CD14-positive monocyte (primary cell): ENCODE measurements at regions of chr11 and their contacts with region 1.

Region 1: DNA sequence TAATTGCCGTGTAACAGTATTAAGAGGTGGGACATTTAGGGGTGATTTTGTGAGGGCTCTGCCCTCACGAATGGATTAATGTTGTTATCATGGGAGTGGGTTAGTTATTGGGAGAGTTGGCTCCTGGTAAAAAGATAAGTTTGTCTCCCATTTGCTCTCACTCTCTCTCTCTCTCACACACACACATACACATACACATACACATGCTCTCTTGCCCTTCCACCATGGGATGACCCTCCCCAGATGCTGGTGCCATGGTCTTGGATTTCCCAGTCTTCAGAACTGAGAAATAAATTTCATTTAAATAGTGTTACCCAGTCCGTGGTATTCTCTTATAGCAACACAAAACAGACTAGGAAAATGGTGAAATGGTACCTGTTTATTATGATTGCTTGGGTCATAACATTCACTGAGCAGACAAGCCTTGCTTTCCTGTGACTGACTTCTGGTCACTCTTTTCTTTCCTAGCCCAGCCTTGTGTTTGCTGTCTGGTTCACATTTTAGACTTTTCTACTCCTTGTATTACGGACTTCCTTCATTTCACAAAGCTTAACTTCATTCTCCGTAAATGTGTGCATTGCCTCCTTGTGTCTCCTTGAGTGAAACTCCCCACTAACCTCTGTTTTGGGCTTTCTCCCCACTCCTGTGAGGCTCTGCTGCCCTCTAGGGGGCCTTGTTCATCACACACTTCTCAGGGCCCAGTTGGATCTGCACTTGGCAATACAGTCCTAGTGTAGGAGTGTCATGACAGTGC is 206.5 kb upstream of the CTSC start:
- DNase-seq: peak; percentile 44 to 63 (median 58)
- H3K4me3 ChIP-seq: no peak overlapping the region
- H3K4me3 Mint-ChIP-seq: no peak overlapping the region
- H3K27ac ChIP-seq: no peak overlapping the region
- H3K27ac Mint-ChIP-seq: peak overlapping the region in 1 of 7 donors; percentile 8
- H3K4me1 ChIP-seq: no peaks in the 10 kb centered on the region
- H3K4me1 Mint-ChIP-seq: peaks cover 2% of the 10 kb centered on the region
- H3K27me3 ChIP-seq: no peaks in the 10 kb centered on the region
- H3K27me3 Mint-ChIP-seq: peaks cover 1 to 2% (median 1%) of the 10 kb centered on the region in 3 donors
- CTCF ChIP-seq: peak; percentile 97

Region 2: GRCh38 chr11:87352759-87353707 is 1191.0 kb before region 1 on chr11:
- intact Hi-C with region 1: loop called in 1 of 2 experiments (anchors 5 kb)
- DNase-seq: peak; percentile 45 to 66 (median 54)
- H3K4me3 ChIP-seq: no peak overlapping the region
- H3K4me3 Mint-ChIP-seq: no peak overlapping the region
- H3K27ac ChIP-seq: no peak overlapping the region
- H3K27ac Mint-ChIP-seq: peak overlapping the region in 1 of 7 donors; percentile 19
- H3K4me1 ChIP-seq: peaks cover 8 to 14% of the 10 kb centered on the region in 2 donors
- H3K4me1 Mint-ChIP-seq: peaks cover 18% of the 10 kb centered on the region
- H3K27me3 ChIP-seq: no peaks in the 10 kb centered on the region
- H3K27me3 Mint-ChIP-seq: peaks cover 0 to 3% (median 0%) of the 10 kb centered on the region in 3 donors
- CTCF ChIP-seq: peak; percentile 98

Region 3: GRCh38 chr11:88016392-88017170 is 527.5 kb before region 1 on chr11:
- intact Hi-C with region 1: loop called in 1 of 2 experiments (anchors 1 kb)
- DNase-seq: peak; percentile 33 to 61 (median 61)
- H3K4me3 ChIP-seq: no peak overlapping the region
- H3K4me3 Mint-ChIP-seq: no peak overlapping the region
- H3K27ac ChIP-seq: no peak overlapping the region
- H3K27ac Mint-ChIP-seq: no peak overlapping the region
- H3K4me1 ChIP-seq: no peaks in the 10 kb centered on the region
- H3K4me1 Mint-ChIP-seq: no peaks in the 10 kb centered on the region
- H3K27me3 ChIP-seq: no peaks in the 10 kb centered on the region
- H3K27me3 Mint-ChIP-seq: peaks cover 0 to 2% (median 0%) of the 10 kb centered on the region in 3 donors
- CTCF ChIP-seq: peak; percentile 75

Region 4: DNA sequence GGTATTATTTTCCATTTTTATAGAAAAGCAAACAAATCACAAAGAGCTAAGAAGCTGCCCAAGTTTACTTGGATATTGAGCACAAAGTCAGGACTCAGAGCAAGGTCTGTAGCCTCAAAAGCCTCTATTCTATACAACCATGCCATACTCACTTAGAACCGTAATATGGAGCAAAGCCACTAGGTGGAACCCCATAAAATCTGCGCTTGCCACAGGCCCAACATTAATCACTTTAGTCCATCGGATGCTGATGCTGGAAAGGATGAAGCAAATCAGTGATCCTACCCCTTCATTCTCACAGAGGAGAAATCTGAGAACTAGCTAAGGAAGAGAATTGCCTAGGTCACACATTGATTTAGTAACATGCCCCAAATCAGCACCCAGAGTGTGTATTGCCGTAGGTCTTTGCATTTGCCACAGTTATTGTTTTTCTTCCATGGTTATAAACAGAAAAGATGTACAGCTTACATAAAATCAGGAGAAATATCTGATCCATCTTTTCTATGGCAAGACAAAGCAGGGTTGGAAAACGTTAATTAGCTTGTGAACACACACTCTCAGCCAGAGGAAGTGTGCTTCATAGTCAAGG is 312.1 kb before region 1 on chr11:
- intact Hi-C with region 1: loop called in 1 of 2 experiments (anchors 10 kb)
- DNase-seq: peak in 2 of 3 donors; percentile 6 to 7
- H3K4me3 ChIP-seq: no peak overlapping the region
- H3K4me3 Mint-ChIP-seq: no peak overlapping the region
- H3K27ac ChIP-seq: no peak overlapping the region
- H3K27ac Mint-ChIP-seq: no peak overlapping the region
- H3K4me1 ChIP-seq: no peaks in the 10 kb centered on the region
- H3K4me1 Mint-ChIP-seq: no peaks in the 10 kb centered on the region
- H3K27me3 ChIP-seq: no peaks in the 10 kb centered on the region
- H3K27me3 Mint-ChIP-seq: peaks cover 0 to 2% (median 0%) of the 10 kb centered on the region in 3 donors
- CTCF ChIP-seq: peak; percentile 38

Region 5: GRCh38 chr11:88555018-88555828 is 11.1 kb after region 1 on chr11:
- intact Hi-C with region 1: no loop called
- DNase-seq: no peak
- H3K4me3 ChIP-seq: no peak overlapping the region
- H3K4me3 Mint-ChIP-seq: no peak overlapping the region
- H3K27ac ChIP-seq: no peak overlapping the region
- H3K27ac Mint-ChIP-seq: no peak overlapping the region
- H3K4me1 ChIP-seq: no peaks in the 10 kb centered on the region
- H3K4me1 Mint-ChIP-seq: no peaks in the 10 kb centered on the region
- H3K27me3 ChIP-seq: no peaks in the 10 kb centered on the region
- H3K27me3 Mint-ChIP-seq: peaks cover 1 to 4% (median 2%) of the 10 kb centered on the region in 3 donors
- CTCF ChIP-seq: no peak